Endothelial cell of umbilical vein (primary cell): ENCODE measurements at regions of chrX and their contacts with region 1.

Region 1: GRCh38 chrX:110002300-110003166 is at the start of gene TMEM164:
- DNase-seq: peak; percentile 70
- H3K4me3 ChIP-seq: peak within 1 kb of the TSS; percentile 55 to 70 (median 68)
- H3K27ac ChIP-seq: peak within 1 kb of the TSS; percentile 53
- H3K4me1 ChIP-seq: peaks cover 6% of the 10 kb centered on the region
- H3K27me3 ChIP-seq: no peaks in the 10 kb centered on the region
- CTCF ChIP-seq: no peak
- POLR2A ChIP-seq: peak; percentile 80
- total RNA-seq, gene TMEM164: 22.2 and 25.1 TPM in 2 replicates

Region 2: GRCh38 chrX:109911046-109911445 is 91.5 kb before region 1 on chrX:
- CTCF ChIA-PET with region 1: interaction called, 11 read pairs
- POLR2A ChIA-PET with region 1: no interaction called
- dilution Hi-C with region 1: no loop called
- intact Hi-C with region 1: loop called (anchors 1 kb)
- DNase-seq: peak; percentile 27
- H3K4me3 ChIP-seq: no peak overlapping the region
- H3K27ac ChIP-seq: no peak overlapping the region
- H3K4me1 ChIP-seq: no peaks in the 10 kb centered on the region
- H3K27me3 ChIP-seq: no peaks in the 10 kb centered on the region
- CTCF ChIP-seq: peak; percentile 17 to 18
- POLR2A ChIP-seq: no peak

Region 3: GRCh38 chrX:109952984-109953905 is 49.3 kb before region 1 on chrX:
- CTCF ChIA-PET with region 1: interaction called, 3 read pairs
- POLR2A ChIA-PET with region 1: interaction called, 3 read pairs
- dilution Hi-C with region 1: no loop called
- intact Hi-C with region 1: loop called (anchors 1 kb)
- DNase-seq: peak; percentile 27
- H3K4me3 ChIP-seq: no peak overlapping the region
- H3K27ac ChIP-seq: peak overlapping the region; percentile 67
- H3K4me1 ChIP-seq: peaks cover 23% of the 10 kb centered on the region
- H3K27me3 ChIP-seq: no peaks in the 10 kb centered on the region
- CTCF ChIP-seq: no peak
- POLR2A ChIP-seq: no peak

Region 4: GRCh38 chrX:110026099-110026844 is 23.7 kb after region 1 on chrX:
- CTCF ChIA-PET with region 1: interaction called, 6 read pairs
- POLR2A ChIA-PET with region 1: no interaction called
- dilution Hi-C with region 1: no loop called
- intact Hi-C with region 1: loop called (anchors 1 kb)
- DNase-seq: peak; percentile 84
- H3K4me3 ChIP-seq: no peak overlapping the region
- H3K27ac ChIP-seq: peak overlapping the region; percentile 48
- H3K4me1 ChIP-seq: peaks cover 23% of the 10 kb centered on the region
- H3K27me3 ChIP-seq: no peaks in the 10 kb centered on the region
- CTCF ChIP-seq: no peak
- POLR2A ChIP-seq: no peak

Region 5: GRCh38 chrX:110086916-110087484 is 84.5 kb after region 1 on chrX:
- CTCF ChIA-PET with region 1: no interaction called
- POLR2A ChIA-PET with region 1: no interaction called
- dilution Hi-C with region 1: no loop called
- intact Hi-C with region 1: loop called (anchors 1 kb)
- DNase-seq: peak; percentile 71
- H3K4me3 ChIP-seq: peak overlapping the region in 1 of 3 experiments; percentile 9
- H3K27ac ChIP-seq: peak overlapping the region; percentile 96
- H3K4me1 ChIP-seq: peaks cover 41% of the 10 kb centered on the region
- H3K27me3 ChIP-seq: no peaks in the 10 kb centered on the region
- CTCF ChIP-seq: no peak
- POLR2A ChIP-seq: no peak

Region 6: DNA sequence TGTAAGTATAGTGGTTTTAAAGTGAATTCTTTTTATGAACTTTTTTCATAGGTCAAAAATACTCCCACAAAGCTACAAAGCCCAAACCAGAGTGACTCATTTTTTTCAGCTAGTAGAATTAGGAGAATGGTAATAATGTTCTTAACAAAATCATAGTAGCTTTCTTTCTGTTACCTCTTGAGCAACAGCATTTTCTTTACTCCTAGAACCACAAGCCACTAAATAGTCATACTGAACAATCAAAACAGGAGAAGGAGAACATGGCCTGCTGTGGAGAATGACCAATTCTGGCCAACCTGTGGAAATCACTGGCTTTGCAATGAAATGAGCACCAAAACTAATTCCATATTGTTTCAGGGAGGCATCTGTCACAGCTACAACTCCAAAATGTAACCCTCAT is 202.5 kb after region 1 on chrX:
- CTCF ChIA-PET with region 1: no interaction called
- POLR2A ChIA-PET with region 1: no interaction called
- dilution Hi-C with region 1: no loop called
- intact Hi-C with region 1: no loop called
- DNase-seq: no peak
- H3K4me3 ChIP-seq: no peak overlapping the region
- H3K27ac ChIP-seq: no peak overlapping the region
- H3K4me1 ChIP-seq: peaks cover 2% of the 10 kb centered on the region
- H3K27me3 ChIP-seq: no peaks in the 10 kb centered on the region
- CTCF ChIP-seq: no peak
- POLR2A ChIP-seq: no peak